ENCODE measurements at regions of chr15 and their contacts with region 1.

Region 1: DNA sequence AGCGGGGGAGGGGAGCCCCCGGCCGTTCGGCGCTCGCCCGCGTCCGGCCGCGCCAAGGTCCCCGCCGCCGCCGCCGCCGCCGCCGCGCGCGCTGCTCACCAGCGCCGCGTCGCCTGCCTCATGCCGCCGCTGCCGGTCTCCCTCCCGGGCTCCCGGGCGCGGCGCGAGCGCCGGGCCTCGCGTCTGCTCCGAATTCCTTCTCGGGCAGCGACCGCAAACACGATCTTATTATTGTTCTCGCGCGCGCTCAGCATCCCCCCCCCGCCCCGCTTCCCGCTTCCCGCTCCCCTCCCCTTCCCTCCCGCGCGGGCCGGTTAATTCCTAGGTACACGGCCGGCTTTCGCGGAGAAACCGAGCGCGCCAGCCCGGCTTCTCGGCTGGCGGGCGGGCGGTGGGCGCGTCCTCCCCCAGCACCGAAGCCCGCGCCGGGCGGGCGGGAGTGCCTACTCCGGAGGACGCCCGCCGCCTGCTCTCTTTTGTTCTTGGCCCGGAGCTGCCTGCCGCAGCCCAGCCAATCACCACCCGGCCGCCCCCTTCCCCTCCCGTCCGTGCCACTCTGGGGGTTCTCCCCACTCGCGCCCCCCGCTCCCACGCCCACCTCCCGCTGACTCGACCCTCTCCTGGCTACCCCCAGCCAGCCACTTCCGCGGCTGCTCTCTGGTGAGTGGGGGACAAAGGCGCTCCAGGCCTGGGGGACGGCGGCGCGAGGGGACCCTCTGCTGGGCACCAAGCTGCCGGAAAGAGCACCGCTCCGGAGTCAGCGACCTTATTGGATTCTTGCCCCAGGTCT is at the start of gene HDGFL3:
- DNase-seq: peak; percentile 76
- ATAC-seq: peak; percentile 82
- H3K4me3 Mint-ChIP-seq: peak within 1 kb of the TSS; percentile 90
- H3K27ac Mint-ChIP-seq: peak within 1 kb of the TSS; percentile 94
- H3K4me1 Mint-ChIP-seq: peaks cover 12% of the 10 kb centered on the region
- H3K27me3 Mint-ChIP-seq: peaks cover 21% of the 10 kb centered on the region
- CTCF ChIP-seq: peak; percentile 28
- total RNA-seq, gene HDGFL3: 31.1 to 32.2 TPM

Region 2: GRCh38 chr15:83066734-83067637 is 140.8 kb before region 1 on chr15 and contains the start of gene BTBD1:
- CTCF ChIA-PET with region 1: interaction called, 5 read pairs
- POLR2A ChIA-PET with region 1: interaction called, 3 read pairs
- intact Hi-C with region 1: loop called (anchors 5 kb)
- DNase-seq: peak; percentile 95
- ATAC-seq: peak; percentile 97
- H3K4me3 Mint-ChIP-seq: no peak within 1 kb of the TSS
- H3K27ac Mint-ChIP-seq: peak within 1 kb of the TSS; percentile 88
- H3K4me1 Mint-ChIP-seq: peaks cover 17% of the 10 kb centered on the region
- H3K27me3 Mint-ChIP-seq: no peaks in the 10 kb centered on the region
- CTCF ChIP-seq: no peak
- total RNA-seq, gene BTBD1: 63.3 to 63.8 TPM

Measured in activated CD8-positive, alpha-beta T cell treated with anti-CD3 and anti-CD28 coated beads for 36 hours (primary cell).